Transverse colon (tissue), 4 donors: ENCODE measurements at regions of chr19 and their contacts with region 1.

Region 1: DNA sequence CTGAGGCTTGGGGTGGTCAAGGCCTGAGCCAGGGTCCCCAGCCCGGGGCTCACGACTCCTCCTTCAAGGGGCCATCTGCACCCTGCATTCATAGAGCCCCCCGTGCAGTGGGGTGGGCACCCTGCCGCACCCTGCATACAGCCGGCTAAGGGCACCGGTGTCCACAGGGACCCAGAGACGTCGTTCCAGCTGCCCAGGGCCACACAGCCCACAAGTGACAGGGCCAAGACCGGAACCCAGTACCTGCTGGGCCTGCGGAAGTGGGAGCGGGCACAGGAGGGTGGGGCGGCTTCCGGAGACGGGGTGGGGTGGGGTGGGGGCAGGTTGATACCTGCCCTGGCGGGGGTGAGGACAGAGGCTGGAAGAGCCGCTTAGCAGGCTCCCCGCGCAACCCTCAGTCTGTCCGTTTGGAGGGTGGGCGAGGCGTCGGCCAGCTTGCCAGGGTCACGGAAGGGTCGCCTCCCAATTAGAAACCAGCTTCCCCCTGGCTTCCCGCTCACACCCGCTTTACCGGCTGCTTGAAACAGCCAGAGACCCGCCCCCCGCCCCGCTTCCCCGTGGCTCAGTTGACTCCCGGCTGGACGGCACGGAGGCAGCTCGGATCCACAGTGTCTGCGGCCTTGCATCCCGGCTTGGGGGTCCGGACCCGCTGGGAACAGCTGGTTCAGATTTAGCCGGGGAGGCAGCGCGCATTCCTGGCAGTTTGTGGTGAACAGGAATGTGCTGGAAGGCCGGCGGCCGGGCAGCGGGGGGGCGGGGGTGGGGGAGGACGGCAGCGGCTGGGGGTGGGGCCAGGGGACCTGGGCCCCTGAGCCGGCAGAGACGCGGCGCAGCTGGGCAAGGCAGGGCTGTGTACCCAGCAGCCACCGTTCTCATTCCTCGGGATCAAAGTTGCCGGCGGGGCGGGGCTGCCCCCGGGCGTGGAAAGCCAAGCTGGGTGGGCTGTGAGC is 1.8 kb downstream of the CNN2 start:
- DNase-seq: peak; percentile 84
- H3K4me3 ChIP-seq: peak overlapping the region; percentile 44 to 87 (median 72)
- H3K27ac ChIP-seq: peak overlapping the region; percentile 91 to 97 (median 94)
- H3K4me1 ChIP-seq: peaks cover 14 to 45% (median 36%) of the 10 kb centered on the region in 4 donors
- H3K27me3 ChIP-seq: no peaks in the 10 kb centered on the region
- CTCF ChIP-seq: no peak
- EP300 ChIP-seq: no peak
- POLR2A ChIP-seq: peak; percentile 56

Region 2: GRCh38 chr19:1064661-1065605 is 36.7 kb after region 1 on chr19:
- in situ Hi-C with region 1: no loop called
- intact Hi-C with region 1: no loop called
- DNase-seq: peak; percentile 81
- H3K4me3 ChIP-seq: peak overlapping the region in 1 of 4 donors; percentile 12
- H3K27ac ChIP-seq: peak overlapping the region; percentile 5 to 41 (median 36)
- H3K4me1 ChIP-seq: peaks cover 34 to 53% (median 47%) of the 10 kb centered on the region in 4 donors
- H3K27me3 ChIP-seq: peaks cover 36% of the 10 kb centered on the region
- CTCF ChIP-seq: peak; percentile 82 to 97 (median 88)
- EP300 ChIP-seq: no peak
- POLR2A ChIP-seq: no peak

Region 3: GRCh38 chr19:1076951-1077350 is 48.7 kb after region 1 on chr19:
- in situ Hi-C with region 1: no loop called
- intact Hi-C with region 1: no loop called
- DNase-seq: peak; percentile 89
- H3K4me3 ChIP-seq: peak overlapping the region in 3 of 4 donors; percentile 13 to 37 (median 15)
- H3K27ac ChIP-seq: peak overlapping the region; percentile 30 to 61 (median 60)
- H3K4me1 ChIP-seq: peaks cover 0 to 54% (median 25%) of the 10 kb centered on the region in 4 donors
- H3K27me3 ChIP-seq: peaks cover 12% of the 10 kb centered on the region
- CTCF ChIP-seq: no peak
- EP300 ChIP-seq: no peak
- POLR2A ChIP-seq: no peak

Region 4: GRCh38 chr19:1103708-1104310 is 75.6 kb after region 1 on chr19 and contains the start of gene GPX4:
- in situ Hi-C with region 1: no loop called
- intact Hi-C with region 1: loop called (anchors 2 kb)
- DNase-seq: peak; percentile 100
- H3K4me3 ChIP-seq: peak within 1 kb of the TSS; percentile 52 to 98 (median 91)
- H3K27ac ChIP-seq: peak within 1 kb of the TSS; percentile 98 to 100 (median 100)
- H3K4me1 ChIP-seq: peaks cover 23 to 62% (median 40%) of the 10 kb centered on the region in 4 donors
- H3K27me3 ChIP-seq: no peaks in the 10 kb centered on the region
- CTCF ChIP-seq: peak in 1 of 5 experiments; percentile 19
- EP300 ChIP-seq: no peak
- POLR2A ChIP-seq: peak; percentile 98
- total RNA-seq, gene GPX4: 115 to 426 (median 261) TPM